Activated naive CD4-positive, alpha-beta T cell treated with anti-CD3 and anti-CD28 coated beads for 36 hours (primary cell): ENCODE measurements at regions of chr20 and their contacts with region 1.

Region 1: GRCh38 chr20:1776681-1777475 is 118.3 kb upstream of the SIRPA start:
- DNase-seq: peak; percentile 90
- H3K4me3 Mint-ChIP-seq: peak overlapping the region; percentile 79
- H3K27ac Mint-ChIP-seq: no peak overlapping the region
- H3K4me1 Mint-ChIP-seq: peaks cover 15% of the 10 kb centered on the region
- H3K27me3 Mint-ChIP-seq: peaks cover 4% of the 10 kb centered on the region

Region 2: GRCh38 chr20:1313236-1313964 is 463.5 kb before region 1 on chr20:
- CTCF ChIA-PET with region 1: interaction called, 3 read pairs
- intact Hi-C with region 1: loop called (anchors 10 kb)
- DNase-seq: peak; percentile 65
- H3K4me3 Mint-ChIP-seq: no peak overlapping the region
- H3K27ac Mint-ChIP-seq: no peak overlapping the region
- H3K4me1 Mint-ChIP-seq: peaks cover 6% of the 10 kb centered on the region
- H3K27me3 Mint-ChIP-seq: no peaks in the 10 kb centered on the region

Region 3: DNA sequence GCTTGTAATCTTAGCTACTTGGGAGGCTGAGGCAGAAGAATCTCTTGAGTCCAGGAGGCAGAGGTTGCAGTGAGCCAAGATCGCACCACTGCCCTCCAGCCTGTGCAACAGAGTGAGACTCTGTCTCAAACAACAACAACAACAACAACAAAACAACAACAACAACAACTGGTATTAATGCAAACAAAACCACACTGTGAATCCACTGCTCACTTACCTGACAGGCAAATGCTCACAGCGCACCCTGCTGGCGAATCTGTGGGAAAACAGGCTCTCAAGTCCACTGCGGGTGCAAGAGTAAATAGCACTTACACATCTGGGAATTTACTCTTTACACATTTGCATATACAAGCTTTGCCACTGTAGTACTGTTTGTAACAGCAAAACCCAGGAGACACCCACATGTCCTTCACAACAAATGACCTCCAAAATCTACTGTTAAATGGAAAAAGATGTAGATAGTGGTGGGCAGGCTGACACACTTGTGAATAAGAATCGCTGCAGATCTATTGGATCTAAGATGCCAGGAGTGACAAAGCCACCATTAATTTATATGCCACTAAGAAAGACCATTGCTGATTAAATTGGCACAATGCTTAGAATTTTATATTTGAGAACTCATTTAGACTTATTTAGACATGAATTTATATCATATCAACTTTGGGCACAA is 339.5 kb before region 1 on chr20:
- CTCF ChIA-PET with region 1: interaction called, 6 read pairs
- intact Hi-C with region 1: loop called (anchors 1 kb)
- DNase-seq: peak; percentile 91
- H3K4me3 Mint-ChIP-seq: no peak overlapping the region
- H3K27ac Mint-ChIP-seq: no peak overlapping the region
- H3K4me1 Mint-ChIP-seq: peaks cover 30% of the 10 kb centered on the region
- H3K27me3 Mint-ChIP-seq: no peaks in the 10 kb centered on the region

Region 4: DNA sequence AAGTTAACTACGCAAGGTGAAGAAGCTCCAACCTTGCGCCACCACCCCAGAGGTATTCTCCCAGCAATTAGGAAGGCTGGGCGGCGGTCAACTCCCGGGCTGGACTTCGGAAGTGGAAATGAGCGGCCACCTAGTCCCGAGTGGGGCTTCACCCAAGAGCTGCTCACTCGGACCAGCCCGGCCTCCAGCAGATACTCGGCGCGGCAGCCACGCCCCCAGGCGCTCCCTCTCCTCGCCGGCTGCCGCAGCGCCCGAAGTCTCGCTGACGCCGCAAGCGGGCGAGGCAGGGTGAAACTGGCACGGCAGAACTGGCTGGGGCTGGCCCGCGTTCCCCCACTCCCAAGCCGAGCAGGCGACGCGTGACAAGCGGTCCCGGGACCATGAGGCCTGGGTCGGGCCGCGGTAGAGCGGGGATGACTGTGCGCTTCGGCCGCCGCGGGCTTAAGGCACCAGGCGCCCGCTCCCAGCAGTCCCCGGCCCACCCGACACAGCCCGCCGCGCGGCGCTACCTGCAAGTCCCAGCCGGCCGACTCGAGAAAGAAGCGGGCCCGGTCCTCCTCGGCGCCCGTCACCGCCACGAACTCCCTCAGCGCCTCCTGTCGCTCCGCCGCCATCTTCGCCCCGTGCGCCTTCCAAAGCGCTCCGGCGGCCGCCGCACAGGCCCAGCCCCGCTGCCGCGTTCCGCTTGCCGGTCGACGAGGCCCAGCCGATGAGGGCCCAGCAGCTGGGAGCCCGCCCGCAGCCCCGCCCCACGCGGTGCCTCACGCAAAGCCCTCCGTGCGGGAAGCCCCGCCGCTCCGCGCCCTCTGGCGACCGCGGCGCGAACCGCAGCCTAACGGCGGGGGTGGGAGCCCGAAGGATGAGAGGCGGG is 310.4 kb before region 1 on chr20 and contains the start of gene NSFL1C:
- CTCF ChIA-PET with region 1: interaction called, 25 read pairs
- intact Hi-C with region 1: loop called (anchors 2 kb)
- DNase-seq: peak; percentile 97
- H3K4me3 Mint-ChIP-seq: peak within 1 kb of the TSS; percentile 80
- H3K27ac Mint-ChIP-seq: peak within 1 kb of the TSS; percentile 71
- H3K4me1 Mint-ChIP-seq: peaks cover 44% of the 10 kb centered on the region
- H3K27me3 Mint-ChIP-seq: peaks cover 6% of the 10 kb centered on the region
- total RNA-seq, gene NSFL1C: 80.4 to 84.1 TPM

Region 5: GRCh38 chr20:1509237-1509636 is 267.6 kb before region 1 on chr20:
- CTCF ChIA-PET with region 1: interaction called, 42 read pairs
- intact Hi-C with region 1: no loop called
- DNase-seq: peak; percentile 58
- H3K4me3 Mint-ChIP-seq: no peak overlapping the region
- H3K27ac Mint-ChIP-seq: no peak overlapping the region
- H3K4me1 Mint-ChIP-seq: no peaks in the 10 kb centered on the region
- H3K27me3 Mint-ChIP-seq: no peaks in the 10 kb centered on the region

Region 6: GRCh38 chr20:1567392-1568162 is 209.3 kb before region 1 on chr20:
- CTCF ChIA-PET with region 1: no interaction called
- intact Hi-C with region 1: no loop called
- DNase-seq: no peak
- H3K4me3 Mint-ChIP-seq: no peak overlapping the region
- H3K27ac Mint-ChIP-seq: no peak overlapping the region
- H3K4me1 Mint-ChIP-seq: peaks cover 11% of the 10 kb centered on the region
- H3K27me3 Mint-ChIP-seq: no peaks in the 10 kb centered on the region

Region 7: GRCh38 chr20:1757072-1757471 is 19.8 kb before region 1 on chr20:
- CTCF ChIA-PET with region 1: interaction called, 19 read pairs
- intact Hi-C with region 1: no loop called
- DNase-seq: no peak
- H3K4me3 Mint-ChIP-seq: no peak overlapping the region
- H3K27ac Mint-ChIP-seq: no peak overlapping the region
- H3K4me1 Mint-ChIP-seq: no peaks in the 10 kb centered on the region
- H3K27me3 Mint-ChIP-seq: no peaks in the 10 kb centered on the region

Region 8: DNA sequence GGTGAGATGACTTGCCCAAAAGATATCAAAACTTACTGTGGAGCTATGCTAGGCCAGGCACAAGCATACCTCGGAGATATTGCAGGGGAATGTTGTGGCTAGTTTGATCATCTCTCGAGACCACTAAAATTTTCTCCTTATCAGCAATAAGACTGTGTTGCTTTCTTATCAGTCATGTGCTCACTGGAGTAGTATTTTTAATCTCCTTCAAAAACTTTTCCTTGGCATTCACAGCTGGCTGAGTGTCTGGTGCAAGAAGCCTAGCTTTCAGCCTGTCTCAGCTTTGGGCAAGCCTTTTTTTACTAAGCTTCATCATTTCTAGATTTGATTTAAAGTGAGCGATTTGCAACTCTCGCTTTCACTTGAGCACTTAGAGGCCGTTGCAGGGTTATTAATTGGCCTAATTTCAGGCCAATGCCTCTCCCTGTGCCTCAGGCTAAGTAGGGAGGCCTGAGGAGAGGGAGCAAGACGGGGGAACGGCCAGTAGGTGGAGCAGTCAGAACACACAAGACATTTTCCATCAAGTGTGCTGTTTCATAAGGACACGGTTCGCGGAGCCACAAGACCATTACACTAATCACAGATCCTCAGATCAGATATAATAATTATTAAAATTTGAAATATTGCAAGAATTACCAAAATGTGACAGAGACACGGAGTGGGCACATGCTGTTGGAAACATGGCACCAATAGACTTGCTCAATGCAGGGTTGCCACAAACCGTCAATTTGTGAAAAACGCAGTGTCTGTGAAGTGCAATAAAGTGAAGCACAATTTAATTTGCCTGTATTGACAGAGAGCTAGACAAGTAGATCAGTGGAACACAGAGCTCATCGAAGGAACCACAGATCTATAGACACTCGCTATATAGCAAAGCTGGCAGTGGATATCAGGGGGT is 12.5 kb before region 1 on chr20:
- CTCF ChIA-PET with region 1: interaction called, 66 read pairs
- intact Hi-C with region 1: loop called (anchors 1 kb)
- DNase-seq: peak; percentile 82
- H3K4me3 Mint-ChIP-seq: no peak overlapping the region
- H3K27ac Mint-ChIP-seq: no peak overlapping the region
- H3K4me1 Mint-ChIP-seq: peaks cover 2% of the 10 kb centered on the region
- H3K27me3 Mint-ChIP-seq: no peaks in the 10 kb centered on the region

Region 9: DNA sequence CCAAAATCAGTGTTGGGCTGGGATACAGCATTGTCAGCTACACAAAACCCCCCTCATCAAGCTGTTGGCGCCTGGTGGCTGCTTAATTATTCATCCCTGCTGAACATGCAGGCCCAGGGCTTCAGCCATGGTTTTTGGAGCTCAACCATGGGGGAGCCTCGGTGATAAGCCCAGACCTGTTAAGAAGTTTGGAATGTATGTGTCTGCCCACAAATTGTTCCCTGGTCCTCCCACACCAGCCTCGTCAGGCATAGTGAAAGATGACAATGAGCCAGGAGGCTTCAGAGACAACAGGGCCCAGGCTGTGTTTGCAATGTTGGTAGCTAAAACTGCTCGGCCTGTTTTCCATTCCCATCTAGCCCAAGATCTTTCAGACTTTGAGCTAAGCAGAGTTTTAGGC is 83.6 kb after region 1 on chr20:
- CTCF ChIA-PET with region 1: no interaction called
- intact Hi-C with region 1: no loop called
- DNase-seq: no peak
- H3K4me3 Mint-ChIP-seq: no peak overlapping the region
- H3K27ac Mint-ChIP-seq: no peak overlapping the region
- H3K4me1 Mint-ChIP-seq: no peaks in the 10 kb centered on the region
- H3K27me3 Mint-ChIP-seq: peaks cover 7% of the 10 kb centered on the region